ENCODE measurements at regions of chr10 and their contacts with region 1.

Region 1: GRCh38 chr10:77603534-77603927 is 34.1 kb downstream of the KCNMA1 start:
- DNase-seq: peak in 1 of 2 experiments; percentile 30
- H3K4me3 ChIP-seq: no peak overlapping the region
- H3K27ac ChIP-seq: no peak overlapping the region
- H3K4me1 ChIP-seq: peaks cover 43% of the 10 kb centered on the region
- H3K27me3 ChIP-seq: no peaks in the 10 kb centered on the region
- CTCF ChIP-seq: no peak

Region 2: GRCh38 chr10:77173615-77174461 is 429.7 kb before region 1 on chr10:
- CTCF ChIA-PET with region 1: no interaction called
- POLR2A ChIA-PET with region 1: interaction called, 6 read pairs
- intact Hi-C with region 1: loop called (anchors 1 kb)
- DNase-seq: peak; percentile 63 to 71
- H3K4me3 ChIP-seq: no peak overlapping the region
- H3K27ac ChIP-seq: no peak overlapping the region
- H3K4me1 ChIP-seq: peaks cover 6% of the 10 kb centered on the region
- H3K27me3 ChIP-seq: no peaks in the 10 kb centered on the region
- CTCF ChIP-seq: peak; percentile 98

Region 3: GRCh38 chr10:77494327-77494726 is 109.2 kb before region 1 on chr10:
- CTCF ChIA-PET with region 1: no interaction called
- POLR2A ChIA-PET with region 1: no interaction called
- intact Hi-C with region 1: no loop called
- DNase-seq: no peak
- H3K4me3 ChIP-seq: no peak overlapping the region
- H3K27ac ChIP-seq: no peak overlapping the region
- H3K4me1 ChIP-seq: peaks cover 10% of the 10 kb centered on the region; the same call in 1 of the 2 replicates
- H3K27me3 ChIP-seq: no peaks in the 10 kb centered on the region
- CTCF ChIP-seq: peak; percentile 49; the same call in 1 of the 2 replicates

Region 4: DNA sequence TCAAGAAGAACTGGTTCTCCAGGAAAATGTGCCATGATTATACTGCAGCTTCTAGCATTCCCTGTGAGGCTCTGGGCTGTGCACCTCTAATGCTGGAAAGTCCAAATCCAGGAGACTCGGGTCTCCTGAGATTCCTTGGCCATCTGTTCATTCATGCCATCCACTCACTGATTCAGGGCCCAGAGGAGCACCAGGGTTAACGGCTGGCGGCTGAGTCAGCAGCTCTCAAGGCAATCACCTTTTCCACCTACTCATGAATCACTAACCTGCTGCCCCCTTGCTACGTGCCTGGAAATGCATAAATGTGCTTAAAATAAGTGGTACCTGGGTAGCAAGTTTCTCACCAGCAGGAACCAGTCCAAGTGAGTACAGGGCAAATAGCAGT is 98.7 kb before region 1 on chr10:
- CTCF ChIA-PET with region 1: no interaction called
- POLR2A ChIA-PET with region 1: no interaction called
- intact Hi-C with region 1: loop called (anchors 2 kb)
- DNase-seq: peak; percentile 61 to 88
- H3K4me3 ChIP-seq: no peak overlapping the region
- H3K27ac ChIP-seq: peak overlapping the region; percentile 98
- H3K4me1 ChIP-seq: peaks cover 63% of the 10 kb centered on the region
- H3K27me3 ChIP-seq: no peaks in the 10 kb centered on the region
- CTCF ChIP-seq: peak; percentile 64; the same call in 1 of the 2 replicates

Region 5: GRCh38 chr10:77513781-77514331 is 89.7 kb before region 1 on chr10:
- CTCF ChIA-PET with region 1: no interaction called
- POLR2A ChIA-PET with region 1: no interaction called
- intact Hi-C with region 1: loop called (anchors 1 kb)
- DNase-seq: peak; percentile 92 to 93
- H3K4me3 ChIP-seq: peak overlapping the region; percentile 24; the same call in 1 of the 2 replicates
- H3K27ac ChIP-seq: peak overlapping the region; percentile 73
- H3K4me1 ChIP-seq: peaks cover 47% of the 10 kb centered on the region
- H3K27me3 ChIP-seq: no peaks in the 10 kb centered on the region
- CTCF ChIP-seq: no peak

Region 6: DNA sequence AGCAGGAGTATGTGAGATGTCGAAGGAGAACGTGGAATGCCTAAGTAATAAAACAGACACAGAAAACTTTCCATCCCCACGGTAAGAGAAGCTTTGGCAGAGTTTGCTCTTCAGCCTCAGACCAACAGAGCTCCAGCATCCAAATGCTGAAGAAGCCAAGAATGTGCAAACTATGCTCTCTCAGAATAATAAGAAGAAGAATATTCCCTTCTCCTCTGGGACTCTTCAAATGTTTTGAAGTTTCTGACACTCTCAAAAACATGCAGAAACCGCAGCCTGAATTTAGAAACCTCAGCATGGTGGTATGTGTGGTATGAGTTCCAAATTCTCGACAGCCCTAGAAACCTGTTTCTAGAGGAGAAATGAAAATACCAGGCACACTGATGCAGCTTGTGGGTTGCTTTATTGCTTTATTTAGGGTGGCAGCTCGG is 79.2 kb before region 1 on chr10:
- CTCF ChIA-PET with region 1: no interaction called
- POLR2A ChIA-PET with region 1: interaction called, 27 read pairs
- intact Hi-C with region 1: no loop called
- DNase-seq: no peak
- H3K4me3 ChIP-seq: no peak overlapping the region
- H3K27ac ChIP-seq: no peak overlapping the region
- H3K4me1 ChIP-seq: no peaks in the 10 kb centered on the region
- H3K27me3 ChIP-seq: no peaks in the 10 kb centered on the region
- CTCF ChIP-seq: no peak

Region 7: GRCh38 chr10:77582710-77583115 is 20.8 kb before region 1 on chr10:
- CTCF ChIA-PET with region 1: no interaction called
- POLR2A ChIA-PET with region 1: no interaction called
- intact Hi-C with region 1: loop called (anchors 2 kb)
- DNase-seq: peak; percentile 91 to 96
- H3K4me3 ChIP-seq: no peak overlapping the region
- H3K27ac ChIP-seq: peak overlapping the region; percentile 88
- H3K4me1 ChIP-seq: peaks cover 63% of the 10 kb centered on the region
- H3K27me3 ChIP-seq: no peaks in the 10 kb centered on the region
- CTCF ChIP-seq: no peak

Region 8: DNA sequence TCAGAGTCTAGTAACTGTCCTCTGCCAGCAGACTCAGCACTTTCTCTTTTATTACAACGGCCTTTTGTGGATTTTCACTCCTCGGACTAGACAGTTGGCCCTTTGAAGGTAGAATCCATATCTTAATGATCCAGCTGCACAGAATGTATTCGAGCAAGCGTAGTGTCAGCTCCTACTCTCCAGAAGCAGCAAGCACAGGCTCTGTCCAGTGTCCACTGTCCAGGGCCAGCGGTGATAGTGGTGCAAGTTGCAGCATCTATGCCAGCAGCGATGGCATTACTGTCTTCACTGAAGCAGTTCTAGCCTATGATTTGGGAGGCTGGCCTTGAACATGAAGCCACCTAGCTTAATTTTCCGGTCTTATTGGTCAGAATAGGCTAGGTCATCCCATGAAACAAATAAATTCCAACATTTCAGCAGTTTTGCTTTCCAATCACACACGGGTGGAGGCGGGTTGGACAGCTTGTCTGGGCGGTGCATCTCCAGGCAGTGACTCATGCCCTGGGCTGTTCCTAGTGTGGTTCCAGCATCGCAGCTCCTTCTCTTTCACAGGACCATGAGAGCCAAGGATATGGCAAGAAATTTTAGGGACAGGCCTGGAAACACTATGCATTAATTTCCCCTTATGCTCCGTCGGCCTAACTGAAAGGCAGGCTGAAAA is 142.6 kb after region 1 on chr10:
- CTCF ChIA-PET with region 1: no interaction called
- POLR2A ChIA-PET with region 1: no interaction called
- intact Hi-C with region 1: no loop called
- DNase-seq: no peak
- H3K4me3 ChIP-seq: no peak overlapping the region
- H3K27ac ChIP-seq: no peak overlapping the region
- H3K4me1 ChIP-seq: no peaks in the 10 kb centered on the region
- H3K27me3 ChIP-seq: no peaks in the 10 kb centered on the region
- CTCF ChIP-seq: no peak

Measured in PC-9 (cell line).